Calu3 (cell line): ENCODE measurements at regions of chr21 and their contacts with region 1.

Region 1: DNA sequence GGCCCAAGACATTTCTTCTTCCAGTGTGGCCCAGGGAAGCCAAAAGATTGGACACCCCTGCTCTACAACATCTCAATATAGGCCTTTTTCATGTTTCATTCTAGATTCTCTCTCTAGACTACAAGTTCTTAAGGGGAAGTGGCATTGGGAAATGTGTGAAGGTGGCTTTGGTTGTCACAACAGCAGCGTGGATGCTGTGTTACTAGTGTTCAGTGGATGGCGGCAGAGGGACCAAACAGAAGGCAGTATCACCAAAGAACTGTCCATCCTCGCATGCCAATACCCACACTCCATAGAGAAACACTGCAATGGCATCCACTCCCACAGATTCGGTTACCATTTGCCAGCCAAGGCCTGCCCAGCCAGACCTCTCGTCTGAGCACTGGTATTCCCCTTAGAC is 24.3 kb upstream of the IFNAR2 start:
- DNase-seq: no peak
- H3K4me3 Mint-ChIP-seq: no peak overlapping the region
- H3K27ac Mint-ChIP-seq: peak overlapping the region; percentile 87
- H3K4me1 Mint-ChIP-seq: peaks cover 28% of the 10 kb centered on the region
- H3K27me3 Mint-ChIP-seq: no peaks in the 10 kb centered on the region
- CTCF ChIP-seq: no peak

Region 2: GRCh38 chr21:33127154-33127893 is 78.2 kb before region 1 on chr21:
- CTCF ChIA-PET with region 1: no interaction called
- intact Hi-C with region 1: no loop called
- DNase-seq: peak; percentile 71
- H3K4me3 Mint-ChIP-seq: peak overlapping the region; percentile 28
- H3K27ac Mint-ChIP-seq: no peak overlapping the region
- H3K4me1 Mint-ChIP-seq: peaks cover 13% of the 10 kb centered on the region
- H3K27me3 Mint-ChIP-seq: peaks cover 54% of the 10 kb centered on the region
- CTCF ChIP-seq: peak; percentile 62

Region 3: GRCh38 chr21:33441489-33442477 is 236.3 kb after region 1 on chr21:
- CTCF ChIA-PET with region 1: interaction called, 3 read pairs
- intact Hi-C with region 1: loop called (anchors 1 kb)
- DNase-seq: no peak
- H3K4me3 Mint-ChIP-seq: no peak overlapping the region
- H3K27ac Mint-ChIP-seq: no peak overlapping the region
- H3K4me1 Mint-ChIP-seq: no peaks in the 10 kb centered on the region
- H3K27me3 Mint-ChIP-seq: no peaks in the 10 kb centered on the region
- CTCF ChIP-seq: no peak

Region 4: GRCh38 chr21:33491373-33492102 is 286.1 kb after region 1 on chr21 and contains the start of gene DNAJC28:
- CTCF ChIA-PET with region 1: no interaction called
- intact Hi-C with region 1: no loop called
- DNase-seq: peak; percentile 87
- H3K4me3 Mint-ChIP-seq: peak within 1 kb of the TSS; percentile 81
- H3K27ac Mint-ChIP-seq: peak within 1 kb of the TSS; percentile 24
- H3K4me1 Mint-ChIP-seq: peaks cover 5% of the 10 kb centered on the region
- H3K27me3 Mint-ChIP-seq: peaks cover 22% of the 10 kb centered on the region
- CTCF ChIP-seq: no peak
- total RNA-seq, gene DNAJC28: 1.2 and 2.0 TPM in 2 replicates

Region 5: GRCh38 chr21:33542640-33543504 is 337.4 kb after region 1 on chr21 and contains the start of gene SON:
- CTCF ChIA-PET with region 1: no interaction called
- intact Hi-C with region 1: loop called (anchors 2 kb)
- DNase-seq: peak; percentile 96
- H3K4me3 Mint-ChIP-seq: peak within 1 kb of the TSS; percentile 83
- H3K27ac Mint-ChIP-seq: peak within 1 kb of the TSS; percentile 93
- H3K4me1 Mint-ChIP-seq: no peaks in the 10 kb centered on the region
- H3K27me3 Mint-ChIP-seq: no peaks in the 10 kb centered on the region
- CTCF ChIP-seq: no peak
- total RNA-seq, gene SON: 188 and 191 TPM in 2 replicates